ENCODE measurements at regions of chrX and their contacts with region 1.

Region 1: DNA sequence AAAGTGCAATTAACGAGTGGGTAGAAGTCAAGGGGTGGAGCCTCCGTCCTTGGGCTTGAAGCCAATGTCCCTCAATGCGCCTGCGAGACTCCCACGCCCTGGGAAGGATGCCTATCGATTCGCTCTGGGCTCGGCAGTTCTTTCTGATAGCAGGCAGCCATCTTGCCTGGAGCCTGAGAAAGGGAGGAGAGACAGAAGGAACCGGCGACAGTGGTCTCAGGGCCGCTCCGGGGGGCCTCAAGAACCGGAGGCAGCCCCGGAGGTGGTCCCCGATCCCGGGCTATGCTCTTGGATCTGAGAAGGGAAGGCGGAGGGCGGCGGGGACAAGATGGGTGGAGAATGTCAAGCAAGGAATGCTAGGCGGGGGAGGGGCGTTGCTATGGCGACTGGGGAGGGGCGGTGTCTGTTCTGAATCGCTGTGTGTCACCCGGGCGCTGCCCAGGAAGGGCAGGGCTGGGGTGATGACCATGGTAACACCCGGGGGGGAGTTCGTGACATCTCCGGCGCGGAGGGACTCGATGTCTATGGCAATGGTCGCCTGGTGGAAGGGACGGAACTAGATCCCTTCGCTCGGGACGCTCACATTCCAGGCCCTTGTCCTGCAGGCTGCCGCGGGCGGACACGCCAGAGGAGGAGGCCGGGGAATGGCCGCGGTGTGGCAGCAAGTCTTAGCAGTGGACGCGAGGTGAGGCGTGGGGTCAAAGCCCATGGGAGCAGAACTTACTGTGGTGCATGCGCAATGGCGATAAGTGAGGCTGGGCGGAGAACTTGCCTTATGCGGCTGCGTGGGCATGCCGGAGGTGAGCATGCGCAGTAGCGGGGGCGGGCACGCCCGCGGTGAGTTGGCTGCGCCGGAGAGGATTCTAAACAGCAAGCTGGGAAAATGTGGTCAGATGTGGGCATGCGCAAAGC is at the start of gene WDR13:
- DNase-seq: peak; percentile 90 to 95 (median 93)
- ATAC-seq: peak; percentile 93 to 95 (median 93)
- H3K4me3 ChIP-seq: peak within 1 kb of the TSS; percentile 21 to 96 (median 70)
- H3K27ac ChIP-seq: peak within 1 kb of the TSS; percentile 94 to 100 (median 96)
- H3K4me1 ChIP-seq: peaks cover 0 to 12% (median 3%) of the 10 kb centered on the region in 12 donors
- H3K27me3 ChIP-seq: peaks cover 0 to 4% (median 0%) of the 10 kb centered on the region in 9 donors
- CTCF ChIP-seq: peak in 3 of 12 donors; percentile 12 to 23 (median 18)
- POLR2A ChIP-seq: peak in 1 of 2 donors; percentile 55
- total RNA-seq, gene WDR13: 123 to 235 (median 150) TPM

Region 2: DNA sequence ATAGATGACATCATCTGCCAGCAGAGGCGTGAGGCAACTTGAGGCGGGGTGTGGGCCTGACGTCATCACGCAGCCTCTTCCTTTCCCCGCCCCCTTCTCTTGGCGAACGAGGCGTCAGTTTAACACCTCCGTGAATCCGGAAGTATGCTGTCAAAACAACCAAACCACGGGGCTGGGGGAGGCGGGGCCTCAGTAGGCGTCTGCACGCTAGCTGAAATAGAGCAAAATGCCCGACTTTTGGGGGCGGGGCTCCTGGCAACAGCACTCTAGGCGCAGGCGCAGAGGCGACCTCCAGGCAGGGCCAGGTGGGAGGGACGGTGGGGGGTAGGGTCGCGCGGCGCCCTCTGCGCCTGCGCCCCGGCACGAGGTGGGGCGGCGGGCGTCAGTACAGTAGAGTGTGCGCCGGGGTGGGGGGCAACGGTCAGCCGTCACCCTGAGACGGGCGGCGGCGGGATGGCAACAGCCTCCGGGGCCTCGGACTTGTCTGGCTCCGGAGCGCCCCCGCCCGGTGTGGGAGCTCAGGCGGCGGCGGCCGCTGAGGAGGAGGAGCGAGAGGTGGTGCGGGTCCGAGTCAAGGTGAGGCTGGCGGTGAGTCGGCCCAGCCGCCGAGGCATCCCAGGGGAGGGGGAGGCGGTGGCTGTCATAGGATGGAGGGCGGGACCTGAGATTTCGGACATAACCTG is 58.1 kb before region 1 on chrX and contains the start of gene TBC1D25:
- intact Hi-C with region 1: loop called in 1 of 10 experiments (anchors 10 kb)
- DNase-seq: peak; percentile 95 to 97 (median 96)
- ATAC-seq: peak; percentile 88 to 96 (median 92)
- H3K4me3 ChIP-seq: peak within 1 kb of the TSS; percentile 53 to 91 (median 74)
- H3K27ac ChIP-seq: peak within 1 kb of the TSS; percentile 73 to 95 (median 90)
- H3K4me1 ChIP-seq: peaks cover 0 to 16% (median 3%) of the 10 kb centered on the region in 12 donors
- H3K27me3 ChIP-seq: peaks cover 0 to 6% (median 0%) of the 10 kb centered on the region in 9 donors
- CTCF ChIP-seq: peak in 11 of 12 donors; percentile 6 to 66 (median 45)
- POLR2A ChIP-seq: peak in 1 of 2 donors; percentile 45
- total RNA-seq, gene TBC1D25: 13.4 to 21.6 (median 16.8) TPM

Measured in heart left ventricle (tissue), 16 donors.